IMR-90 (cell line): ENCODE measurements at regions of chr6 and their contacts with region 1.

Region 1: GRCh38 chr6:85678602-85679444 is 36.1 kb upstream of the SYNCRIP start:
- DNase-seq: peak; percentile 99
- ATAC-seq: peak; percentile 88
- H3K4me3 ChIP-seq: peak overlapping the region; percentile 75
- H3K27ac ChIP-seq: peak overlapping the region; percentile 85
- H3K4me1 ChIP-seq: peaks cover 3% of the 10 kb centered on the region; the same call in 1 of the 2 replicates
- H3K27me3 ChIP-seq: no peaks in the 10 kb centered on the region
- CTCF ChIP-seq: no peak
- POLR2A ChIP-seq: peak; percentile 100
- RAD21 ChIP-seq: peak; percentile 7; the same call in 1 of the 2 replicates

Region 2: DNA sequence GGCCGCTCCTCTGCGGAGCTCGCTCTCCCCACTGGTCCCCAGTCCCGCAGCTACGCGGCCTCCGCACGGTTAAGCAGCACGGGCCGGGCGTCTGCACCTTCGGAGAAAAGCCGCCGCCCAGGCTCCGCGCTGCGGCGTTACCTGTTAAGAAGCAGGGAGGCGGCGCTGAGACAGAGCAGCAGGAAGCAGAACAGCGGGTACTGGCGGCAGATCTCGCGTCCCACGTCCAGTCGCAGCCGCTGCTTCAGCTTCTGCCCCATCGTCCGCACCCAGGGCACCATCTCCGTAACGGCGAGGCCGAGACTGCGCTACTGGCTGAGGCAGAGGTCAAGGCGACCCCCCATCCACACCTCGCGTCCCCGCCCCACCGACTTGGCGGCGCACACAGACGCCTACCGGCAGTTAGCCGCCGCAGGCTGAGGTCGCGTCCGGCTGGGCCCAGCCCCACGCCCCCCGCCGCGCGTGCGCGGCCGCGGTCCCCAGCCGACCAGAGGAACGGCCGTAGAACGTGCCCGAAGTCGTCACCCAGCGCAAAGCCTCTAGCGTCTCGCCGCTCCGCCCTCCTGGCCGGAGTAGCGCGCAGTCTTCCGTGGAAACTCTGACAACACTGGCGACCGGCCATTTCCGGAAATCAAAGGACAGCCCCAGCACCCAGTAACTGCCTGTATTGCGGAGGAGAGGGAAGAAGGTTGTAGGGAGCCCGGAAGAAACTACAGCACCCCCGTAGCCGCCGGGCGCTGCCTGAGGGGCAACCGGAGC is 85.2 kb before region 1 on chr6 and contains the start of gene SNX14:
- CTCF ChIA-PET with region 1: interaction called, 4 read pairs
- POLR2A ChIA-PET with region 1: no interaction called
- dilution Hi-C with region 1: no loop called
- in situ Hi-C with region 1: no loop called
- intact Hi-C with region 1: loop called (anchors 5 kb)
- DNase-seq: peak; percentile 94
- ATAC-seq: peak; percentile 94
- H3K4me3 ChIP-seq: peak within 1 kb of the TSS; percentile 84
- H3K27ac ChIP-seq: peak within 1 kb of the TSS; percentile 92
- H3K4me1 ChIP-seq: peaks cover 2% of the 10 kb centered on the region; the same call in 1 of the 2 replicates
- H3K27me3 ChIP-seq: no peaks in the 10 kb centered on the region
- CTCF ChIP-seq: peak; percentile 10; the same call in 1 of the 2 replicates
- POLR2A ChIP-seq: peak; percentile 87
- RAD21 ChIP-seq: peak; percentile 6; the same call in 1 of the 2 replicates
- total RNA-seq, gene SNX14: 61.8 and 116 TPM in 2 replicates

Region 3: GRCh38 chr6:85642774-85643536 is 35.9 kb before region 1 on chr6 and contains the start of gene SYNCRIP:
- CTCF ChIA-PET with region 1: no interaction called
- POLR2A ChIA-PET with region 1: interaction called, 21 read pairs
- dilution Hi-C with region 1: no loop called
- in situ Hi-C with region 1: loop called (anchors 5 kb)
- intact Hi-C with region 1: loop called (anchors 1 kb)
- DNase-seq: peak; percentile 97
- ATAC-seq: peak; percentile 87
- H3K4me3 ChIP-seq: peak within 1 kb of the TSS; percentile 95
- H3K27ac ChIP-seq: peak within 1 kb of the TSS; percentile 98
- H3K4me1 ChIP-seq: peaks cover 4% of the 10 kb centered on the region; the same call in 1 of the 2 replicates
- H3K27me3 ChIP-seq: no peaks in the 10 kb centered on the region
- CTCF ChIP-seq: no peak
- POLR2A ChIP-seq: peak; percentile 93
- RAD21 ChIP-seq: no peak
- total RNA-seq, gene SYNCRIP: 59.3 and 120 TPM in 2 replicates

Region 4: DNA sequence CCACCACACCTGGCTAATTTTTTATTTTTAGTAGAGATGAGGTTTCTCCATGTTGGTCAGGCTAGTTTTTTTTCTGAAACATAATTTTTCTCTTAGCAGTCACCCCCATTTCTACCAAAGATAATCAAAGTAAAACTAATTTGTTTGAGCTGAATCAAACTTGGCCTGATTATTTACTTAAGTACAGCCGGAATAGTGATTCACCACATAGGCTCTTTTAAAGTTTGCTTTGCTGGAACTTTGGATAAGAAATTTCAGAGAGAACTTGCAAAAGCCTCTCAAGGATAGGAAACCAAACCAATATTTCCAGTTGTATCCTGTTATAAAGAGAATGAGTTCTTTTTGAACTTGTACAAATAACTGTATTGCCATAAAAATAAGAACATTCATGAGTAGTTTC is 68.8 kb after region 1 on chr6:
- CTCF ChIA-PET with region 1: no interaction called
- POLR2A ChIA-PET with region 1: interaction called, 8 read pairs
- dilution Hi-C with region 1: no loop called
- in situ Hi-C with region 1: no loop called
- intact Hi-C with region 1: loop called (anchors 1 kb)
- DNase-seq: peak; percentile 84
- ATAC-seq: peak; percentile 79
- H3K4me3 ChIP-seq: no peak overlapping the region
- H3K27ac ChIP-seq: peak overlapping the region; percentile 87
- H3K4me1 ChIP-seq: peaks cover 2% of the 10 kb centered on the region; the same call in 1 of the 2 replicates
- H3K27me3 ChIP-seq: no peaks in the 10 kb centered on the region; the same call in 1 of the 2 replicates
- CTCF ChIP-seq: no peak
- POLR2A ChIP-seq: no peak
- RAD21 ChIP-seq: no peak

Region 5: GRCh38 chr6:85887462-85887861 is 208.6 kb after region 1 on chr6:
- CTCF ChIA-PET with region 1: no interaction called
- POLR2A ChIA-PET with region 1: no interaction called
- dilution Hi-C with region 1: no loop called
- in situ Hi-C with region 1: no loop called
- intact Hi-C with region 1: no loop called
- DNase-seq: no peak
- ATAC-seq: no peak
- H3K4me3 ChIP-seq: no peak overlapping the region
- H3K27ac ChIP-seq: no peak overlapping the region
- H3K4me1 ChIP-seq: no peaks in the 10 kb centered on the region
- H3K27me3 ChIP-seq: no peaks in the 10 kb centered on the region
- CTCF ChIP-seq: no peak
- POLR2A ChIP-seq: no peak
- RAD21 ChIP-seq: no peak

Region 6: DNA sequence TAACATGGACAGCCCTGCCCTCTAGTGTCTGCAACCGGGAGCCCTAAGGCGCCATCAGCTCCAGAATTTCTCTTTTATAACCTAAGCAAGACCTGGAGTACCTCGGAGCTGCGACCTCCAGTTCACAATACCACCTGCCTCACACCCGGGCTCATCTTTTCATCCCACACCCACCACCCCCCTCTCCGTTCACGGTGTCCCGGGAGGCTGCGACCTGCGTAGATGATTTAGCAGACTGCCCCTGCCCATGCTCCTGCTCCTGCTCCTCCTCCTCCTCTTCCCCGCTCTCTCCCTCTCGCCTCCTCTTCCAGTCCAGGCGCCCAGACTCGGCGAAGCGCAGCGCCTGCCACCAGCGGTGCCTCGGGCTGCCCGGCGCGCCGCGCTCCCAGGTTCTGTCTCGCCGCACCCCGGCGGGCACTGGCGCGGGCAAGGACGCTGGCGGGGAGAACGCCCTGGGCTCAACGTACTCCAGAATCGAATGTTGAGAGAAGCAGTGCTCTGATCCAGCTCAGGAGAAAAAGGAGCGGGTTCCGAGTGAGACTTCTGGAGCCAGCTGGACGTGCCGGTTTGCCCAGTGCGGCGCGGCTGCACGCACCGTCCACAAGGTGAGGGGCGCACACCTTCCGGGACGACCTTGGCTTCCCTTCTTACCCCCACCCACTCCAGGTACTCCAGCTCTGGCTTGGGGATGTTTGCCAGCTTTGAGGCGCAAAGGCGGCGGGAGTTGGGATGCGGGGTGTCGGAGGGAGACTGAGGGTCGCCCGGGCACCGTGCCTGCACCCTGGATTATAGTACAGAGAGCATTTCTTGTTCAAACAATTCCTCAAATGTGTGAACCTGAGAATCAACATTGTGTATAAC is 1258.6 kb after region 1 on chr6 and contains the start of gene HTR1E:
- CTCF ChIA-PET with region 1: no interaction called
- POLR2A ChIA-PET with region 1: no interaction called
- dilution Hi-C with region 1: no loop called
- in situ Hi-C with region 1: no loop called
- intact Hi-C with region 1: loop called (anchors 5 kb)
- DNase-seq: peak; percentile 2
- ATAC-seq: peak; percentile 82
- H3K4me3 ChIP-seq: no peak within 1 kb of the TSS
- H3K27ac ChIP-seq: no peak within 1 kb of the TSS
- H3K4me1 ChIP-seq: no peaks in the 10 kb centered on the region
- H3K27me3 ChIP-seq: peaks cover 10% of the 10 kb centered on the region
- CTCF ChIP-seq: peak; percentile 38
- POLR2A ChIP-seq: no peak
- RAD21 ChIP-seq: 0 out of 2 replicates have a peak, but pooled peaks have one; percentile 19
- total RNA-seq, gene HTR1E: not detected in 2 replicates